Sigmoid colon (tissue), 7 donors: ENCODE measurements at regions of chr10 and their contacts with region 1.

Region 1: DNA sequence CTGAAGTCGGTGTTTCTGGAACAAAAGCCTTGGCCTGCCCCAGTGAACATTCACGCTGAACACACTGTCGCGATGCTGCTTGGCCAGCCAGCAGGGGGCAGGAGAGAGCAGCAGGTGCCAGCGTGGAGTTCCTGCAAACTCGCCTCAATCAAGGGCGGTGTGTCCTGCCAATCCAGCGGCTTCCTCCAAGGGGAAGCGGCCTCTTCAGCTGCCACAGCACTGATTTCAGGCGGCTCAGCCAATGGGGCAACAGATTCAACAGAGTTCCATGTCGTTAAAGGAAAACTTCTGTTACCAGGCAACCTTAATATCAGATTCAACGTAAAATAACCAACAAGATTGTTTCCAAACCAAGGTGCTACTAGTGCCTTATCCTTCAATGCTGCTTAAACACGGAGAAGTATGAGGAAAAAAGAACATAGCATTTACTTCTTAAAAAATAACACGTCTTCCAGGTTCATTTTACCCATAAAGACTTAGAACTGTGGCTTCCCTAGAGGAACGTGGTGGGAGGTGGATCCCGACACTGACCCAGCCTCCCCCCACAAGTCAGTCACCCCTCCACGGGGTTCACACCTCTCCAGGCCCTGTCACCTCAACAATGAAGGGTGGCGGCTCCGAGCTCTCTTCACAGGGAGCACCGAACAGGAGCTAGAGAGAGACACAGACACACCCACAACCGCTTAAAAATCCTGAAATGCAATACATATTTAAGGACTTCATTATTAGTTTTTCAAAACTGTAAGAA is 178.2 kb downstream of the DIP2C start:
- DNase-seq: peak; percentile 96
- H3K4me3 ChIP-seq: peak overlapping the region in 1 of 4 donors; percentile 7
- H3K27ac ChIP-seq: peak overlapping the region; percentile 67 to 92 (median 79)
- H3K4me1 ChIP-seq: peaks cover 0 to 73% (median 61%) of the 10 kb centered on the region in 4 donors
- H3K27me3 ChIP-seq: no peaks in the 10 kb centered on the region
- CTCF ChIP-seq: peak; percentile 91 to 98 (median 96)
- EP300 ChIP-seq: peak in 1 of 4 donors; percentile 52
- POLR2A ChIP-seq: no peak

Region 2: GRCh38 chr10:607545-608185 is 96.4 kb after region 1 on chr10:
- intact Hi-C with region 1: loop called (anchors 5 kb)
- DNase-seq: peak; percentile 54
- H3K4me3 ChIP-seq: peak overlapping the region in 1 of 4 donors; percentile 28
- H3K27ac ChIP-seq: peak overlapping the region; percentile 38 to 79 (median 66)
- H3K4me1 ChIP-seq: peaks cover 0 to 88% (median 77%) of the 10 kb centered on the region in 4 donors
- H3K27me3 ChIP-seq: no peaks in the 10 kb centered on the region
- CTCF ChIP-seq: no peak
- EP300 ChIP-seq: no peak
- POLR2A ChIP-seq: no peak

Region 3: DNA sequence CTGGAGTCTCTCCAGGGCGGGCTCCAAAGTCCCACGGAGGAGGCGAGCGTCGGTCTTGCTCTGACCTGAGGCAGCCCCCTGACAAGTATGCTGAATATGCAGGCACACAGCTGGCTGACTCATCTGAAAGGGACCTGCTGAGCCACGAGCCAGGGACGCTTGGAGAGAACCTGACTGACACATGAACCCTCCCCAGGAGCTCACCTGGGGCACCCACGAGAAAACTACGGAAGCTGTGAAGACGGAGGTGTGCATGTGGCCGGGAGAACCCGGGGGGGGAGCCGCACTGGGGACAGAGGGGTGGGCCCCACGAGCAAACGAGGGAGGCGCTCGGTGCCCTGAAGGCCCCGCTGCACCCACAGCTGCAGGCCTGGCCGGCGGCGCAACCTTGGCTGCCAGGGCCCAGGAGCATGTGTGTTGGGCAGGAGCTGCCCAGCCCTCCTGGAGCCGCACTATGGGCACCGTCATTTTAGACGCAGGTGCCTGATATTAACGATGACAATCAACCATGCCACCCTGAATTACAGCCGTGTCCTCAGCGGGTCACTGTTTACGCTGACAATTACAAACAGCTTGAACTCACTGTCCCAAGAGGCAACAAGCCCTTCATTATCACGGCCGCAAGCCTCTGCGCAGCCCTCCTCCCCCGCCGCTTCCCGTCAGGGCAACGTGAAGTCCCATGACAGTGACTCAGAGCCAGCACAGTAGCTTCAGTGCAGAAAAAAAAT is 113.5 kb after region 1 on chr10:
- intact Hi-C with region 1: loop called (anchors 5 kb)
- DNase-seq: peak; percentile 90
- H3K4me3 ChIP-seq: peak overlapping the region in 3 of 4 donors; percentile 13 to 32 (median 29)
- H3K27ac ChIP-seq: peak overlapping the region; percentile 88 to 93 (median 89)
- H3K4me1 ChIP-seq: peaks cover 0 to 79% (median 73%) of the 10 kb centered on the region in 4 donors
- H3K27me3 ChIP-seq: no peaks in the 10 kb centered on the region
- CTCF ChIP-seq: no peak
- EP300 ChIP-seq: peak in 3 of 4 donors; percentile 65 to 95 (median 92)
- POLR2A ChIP-seq: no peak

Region 4: DNA sequence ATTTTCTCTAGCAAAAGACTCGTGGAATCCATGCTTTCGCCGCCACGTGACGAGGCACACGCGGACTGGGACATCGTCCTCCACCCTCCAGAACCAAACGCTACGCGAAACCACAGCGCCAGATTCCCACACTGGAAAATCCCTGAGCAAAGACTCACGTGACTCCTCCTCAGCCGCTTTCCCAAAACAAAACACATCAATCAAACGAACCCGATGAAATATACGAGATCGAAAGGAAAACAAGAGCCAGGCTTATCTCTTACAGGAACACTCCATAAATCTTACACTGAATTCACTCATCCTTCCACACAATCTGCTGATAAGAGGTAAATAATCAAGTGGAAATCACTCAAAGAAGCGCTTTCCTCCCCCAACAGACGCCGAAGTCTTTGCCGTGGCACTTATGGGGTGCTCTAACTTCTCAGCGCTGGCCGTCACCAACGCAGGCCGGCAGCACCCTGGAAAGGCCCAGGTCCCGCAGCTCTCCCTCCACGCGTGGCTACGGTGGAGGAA is 154.4 kb after region 1 on chr10:
- intact Hi-C with region 1: loop called (anchors 5 kb)
- DNase-seq: peak; percentile 94
- H3K4me3 ChIP-seq: peak overlapping the region; percentile 24 to 43 (median 34)
- H3K27ac ChIP-seq: peak overlapping the region; percentile 29 to 90 (median 84)
- H3K4me1 ChIP-seq: peaks cover 0 to 94% (median 74%) of the 10 kb centered on the region in 4 donors
- H3K27me3 ChIP-seq: no peaks in the 10 kb centered on the region
- CTCF ChIP-seq: no peak
- EP300 ChIP-seq: peak in 2 of 4 donors; percentile 26 to 91
- POLR2A ChIP-seq: no peak

Region 5: GRCh38 chr10:683448-684071 is 172.3 kb after region 1 on chr10:
- intact Hi-C with region 1: loop called (anchors 1 kb)
- DNase-seq: peak; percentile 91
- H3K4me3 ChIP-seq: peak overlapping the region in 3 of 4 donors; percentile 26 to 32 (median 31)
- H3K27ac ChIP-seq: peak overlapping the region; percentile 77 to 99 (median 92)
- H3K4me1 ChIP-seq: peaks cover 0 to 81% (median 65%) of the 10 kb centered on the region in 4 donors
- H3K27me3 ChIP-seq: no peaks in the 10 kb centered on the region
- CTCF ChIP-seq: no peak
- EP300 ChIP-seq: peak in 3 of 4 donors; percentile 91 to 94 (median 92)
- POLR2A ChIP-seq: peak in 1 of 2 donors; percentile 30

Region 6: DNA sequence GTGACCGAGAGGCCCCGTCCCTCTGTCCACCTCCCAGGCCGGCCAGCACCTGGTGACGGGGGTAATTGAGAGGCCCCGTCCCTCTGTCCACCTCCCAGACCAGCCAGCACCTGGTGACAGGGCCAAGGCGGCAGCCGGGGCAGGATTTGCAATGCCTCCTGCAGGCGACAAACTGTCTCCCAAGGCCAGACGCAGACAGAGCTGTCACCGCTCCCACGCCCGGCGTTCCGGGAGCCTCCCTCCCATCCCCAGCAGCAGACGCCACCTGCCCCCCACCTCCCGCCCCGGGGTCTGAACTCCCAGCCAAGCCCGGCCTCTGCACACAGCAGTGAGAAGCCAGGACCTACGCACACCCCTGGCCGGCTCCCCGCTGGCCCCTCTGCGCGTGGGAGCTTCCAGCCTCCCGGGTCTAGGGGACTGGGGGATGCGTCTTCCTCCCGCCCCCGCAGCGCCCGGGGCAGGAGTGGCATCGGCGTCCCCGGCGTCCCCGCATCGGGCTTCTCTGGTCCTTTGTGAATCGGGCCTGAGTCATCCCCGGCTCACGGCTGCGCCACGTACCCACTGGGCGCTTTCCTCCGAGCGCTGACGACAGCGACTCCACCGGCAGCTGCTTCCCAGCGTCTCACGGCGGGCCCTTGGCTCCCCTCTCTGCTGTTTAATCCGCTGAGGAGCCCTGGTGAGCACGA is 273.3 kb after region 1 on chr10:
- intact Hi-C with region 1: loop called (anchors 2 kb)
- DNase-seq: peak; percentile 86
- H3K4me3 ChIP-seq: peak overlapping the region; percentile 18 to 55 (median 45)
- H3K27ac ChIP-seq: peak overlapping the region in 2 of 4 donors; percentile 23 to 62
- H3K4me1 ChIP-seq: peaks cover 0 to 22% (median 13%) of the 10 kb centered on the region in 4 donors
- H3K27me3 ChIP-seq: no peaks in the 10 kb centered on the region
- CTCF ChIP-seq: no peak
- EP300 ChIP-seq: no peak
- POLR2A ChIP-seq: no peak